ENCODE measurements at regions of chr11 and their contacts with region 1.

Region 1: DNA sequence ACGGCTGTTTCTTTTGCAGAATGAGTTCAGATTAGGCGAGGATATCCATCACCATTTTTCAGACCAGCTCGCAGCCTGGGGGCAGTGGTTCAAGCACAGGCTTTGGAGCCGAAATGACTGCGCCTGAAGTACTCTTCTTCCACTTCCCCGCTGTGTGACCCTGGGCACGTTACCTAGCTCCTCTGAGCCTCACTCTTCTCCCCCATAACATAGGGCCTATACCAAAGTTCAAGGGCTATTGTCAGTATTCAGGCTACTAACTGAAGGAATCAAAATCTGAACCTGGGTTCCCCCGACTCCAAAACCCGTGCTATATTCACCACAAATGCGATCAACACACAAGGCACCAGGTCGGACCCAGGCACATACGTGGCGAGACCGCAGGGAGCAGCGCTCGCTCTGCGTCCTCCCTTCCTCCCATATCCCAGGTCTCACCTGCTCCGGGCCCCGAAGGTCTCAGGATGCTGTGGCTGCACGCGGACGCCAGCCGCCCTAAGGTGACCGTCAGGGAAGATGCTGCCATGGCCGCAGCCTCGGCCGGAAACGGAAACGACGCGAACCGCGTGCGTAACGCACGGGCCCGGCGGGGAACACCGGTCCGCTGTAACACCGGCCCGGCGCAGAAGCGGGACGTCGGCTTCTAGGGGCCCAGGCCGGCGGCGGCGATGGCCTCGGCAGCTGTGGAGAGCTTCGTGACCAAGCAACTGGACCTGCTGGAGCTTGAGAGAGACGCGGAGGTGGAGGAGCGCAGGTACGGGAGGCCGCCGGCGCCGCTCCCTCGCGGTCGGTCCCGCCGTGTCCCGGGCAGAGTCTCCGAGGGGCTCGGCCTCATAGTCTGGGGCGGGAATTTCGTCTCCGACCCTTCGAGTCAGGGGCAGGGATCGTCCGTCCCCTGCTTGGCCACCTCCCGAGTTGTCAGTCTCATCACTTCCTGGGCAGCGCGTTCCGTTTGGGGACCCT is at the starts of genes IGHMBP2 and MRPL21:
- DNase-seq: peak; percentile 76 to 93 (median 86)
- ATAC-seq: peak; percentile 90
- H3K4me3 ChIP-seq: peak within 1 kb of the TSS; percentile 55 to 82
- H3K4me3 Mint-ChIP-seq: peak within 1 kb of the TSS; percentile 98
- H3K27ac ChIP-seq: peak within 1 kb of the TSS; percentile 64 to 87
- H3K27ac Mint-ChIP-seq: peak within 1 kb of the TSS; percentile 97
- H3K4me1 ChIP-seq: peaks cover 19% of the 10 kb centered on the region
- H3K4me1 Mint-ChIP-seq: peaks cover 46% of the 10 kb centered on the region
- H3K27me3 ChIP-seq: no peaks in the 10 kb centered on the region
- H3K27me3 Mint-ChIP-seq: no peaks in the 10 kb centered on the region
- CTCF ChIP-seq: no peak
- total RNA-seq, gene IGHMBP2: 25.5 to 27.3 TPM
- total RNA-seq, gene MRPL21: 48.4 to 53.6 TPM

Region 2: GRCh38 chr11:68459886-68460740 is 443.5 kb before region 1 on chr11:
- CTCF ChIA-PET with region 1: no interaction called
- POLR2A ChIA-PET with region 1: no interaction called
- intact Hi-C with region 1: loop called in 1 of 2 experiments (anchors 5 kb)
- DNase-seq: peak; percentile 90 to 98 (median 94)
- ATAC-seq: peak; percentile 91
- H3K4me3 ChIP-seq: peak overlapping the region; percentile 92 to 95
- H3K4me3 Mint-ChIP-seq: peak overlapping the region; percentile 97
- H3K27ac ChIP-seq: peak overlapping the region; percentile 95 to 98
- H3K27ac Mint-ChIP-seq: peak overlapping the region; percentile 98
- H3K4me1 ChIP-seq: peaks cover 35% of the 10 kb centered on the region
- H3K4me1 Mint-ChIP-seq: peaks cover 38% of the 10 kb centered on the region
- H3K27me3 ChIP-seq: no peaks in the 10 kb centered on the region
- H3K27me3 Mint-ChIP-seq: no peaks in the 10 kb centered on the region
- CTCF ChIP-seq: no peak

Region 3: GRCh38 chr11:68751004-68751856 is 152.3 kb before region 1 on chr11 and contains the start of gene TESMIN:
- CTCF ChIA-PET with region 1: no interaction called
- POLR2A ChIA-PET with region 1: no interaction called
- intact Hi-C with region 1: loop called in 1 of 2 experiments (anchors 5 kb)
- DNase-seq: peak; percentile 83 to 95 (median 91)
- ATAC-seq: peak; percentile 99
- H3K4me3 ChIP-seq: peak within 1 kb of the TSS; percentile 30 to 50
- H3K4me3 Mint-ChIP-seq: peak within 1 kb of the TSS; percentile 72
- H3K27ac ChIP-seq: no peak within 1 kb of the TSS
- H3K27ac Mint-ChIP-seq: no peak within 1 kb of the TSS
- H3K4me1 ChIP-seq: peaks cover 7% of the 10 kb centered on the region
- H3K4me1 Mint-ChIP-seq: peaks cover 13% of the 10 kb centered on the region
- H3K27me3 ChIP-seq: no peaks in the 10 kb centered on the region
- H3K27me3 Mint-ChIP-seq: no peaks in the 10 kb centered on the region
- CTCF ChIP-seq: no peak
- total RNA-seq, gene TESMIN: 1.8 to 2.5 TPM

Region 4: GRCh38 chr11:68825571-68825970 is 78.0 kb before region 1 on chr11:
- CTCF ChIA-PET with region 1: no interaction called
- POLR2A ChIA-PET with region 1: no interaction called
- intact Hi-C with region 1: loop called in 1 of 2 experiments (anchors 1 kb)
- DNase-seq: peak in 8 of 9 experiments; percentile 54 to 75 (median 67)
- ATAC-seq: peak; percentile 91
- H3K4me3 ChIP-seq: no peak overlapping the region
- H3K4me3 Mint-ChIP-seq: no peak overlapping the region
- H3K27ac ChIP-seq: no peak overlapping the region
- H3K27ac Mint-ChIP-seq: peak overlapping the region; percentile 32
- H3K4me1 ChIP-seq: peaks cover 35% of the 10 kb centered on the region
- H3K4me1 Mint-ChIP-seq: peaks cover 48% of the 10 kb centered on the region
- H3K27me3 ChIP-seq: no peaks in the 10 kb centered on the region
- H3K27me3 Mint-ChIP-seq: no peaks in the 10 kb centered on the region
- CTCF ChIP-seq: peak; percentile 21

Region 5: DNA sequence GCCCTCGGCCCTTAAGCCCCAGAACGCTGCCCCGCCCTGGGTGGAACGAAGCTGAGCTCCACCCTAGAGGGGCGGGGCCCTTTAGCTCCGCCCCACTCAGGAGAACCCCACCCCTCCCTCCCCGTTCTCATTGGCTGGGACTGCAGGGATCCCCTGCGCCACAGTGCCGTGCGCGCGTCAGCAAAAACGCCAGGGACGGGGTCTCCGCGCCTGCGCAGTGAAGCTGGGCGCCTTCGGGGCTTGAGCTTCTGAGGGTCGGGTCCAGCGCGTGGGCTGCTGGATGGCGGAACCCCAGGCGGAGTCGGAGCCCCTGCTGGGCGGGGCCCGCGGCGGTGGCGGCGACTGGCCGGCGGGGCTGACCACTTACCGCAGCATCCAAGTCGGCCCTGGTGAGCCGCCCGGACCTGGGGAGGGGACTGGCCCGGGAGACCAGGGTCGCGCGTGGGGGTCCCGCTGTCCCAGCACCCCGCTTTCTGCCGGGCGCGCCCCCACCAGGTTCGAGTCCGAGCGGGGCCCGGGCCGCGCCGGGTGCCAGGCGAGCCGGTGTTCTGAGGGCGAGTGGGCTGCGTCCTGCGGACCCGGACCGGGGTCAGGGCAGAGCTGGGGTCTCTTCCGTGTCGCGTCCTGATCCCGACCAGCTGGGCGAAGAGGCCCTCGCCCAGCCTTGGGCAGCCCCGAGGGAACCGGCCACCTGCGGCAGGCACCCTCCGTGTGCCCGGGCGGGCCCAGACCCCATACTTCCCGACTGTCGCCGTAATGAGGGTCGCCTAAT is 145.3 kb after region 1 on chr11 and contains the start of gene TPCN2:
- CTCF ChIA-PET with region 1: no interaction called
- POLR2A ChIA-PET with region 1: no interaction called
- intact Hi-C with region 1: loop called (anchors 1 to 2 kb)
- DNase-seq: peak; percentile 79 to 98 (median 89)
- ATAC-seq: peak; percentile 98
- H3K4me3 ChIP-seq: peak within 1 kb of the TSS; percentile 61 to 70
- H3K4me3 Mint-ChIP-seq: peak within 1 kb of the TSS; percentile 79
- H3K27ac ChIP-seq: peak within 1 kb of the TSS; percentile 74 to 91
- H3K27ac Mint-ChIP-seq: peak within 1 kb of the TSS; percentile 92
- H3K4me1 ChIP-seq: peaks cover 9% of the 10 kb centered on the region
- H3K4me1 Mint-ChIP-seq: peaks cover 28% of the 10 kb centered on the region
- H3K27me3 ChIP-seq: no peaks in the 10 kb centered on the region
- H3K27me3 Mint-ChIP-seq: no peaks in the 10 kb centered on the region
- CTCF ChIP-seq: no peak
- total RNA-seq, gene TPCN2: 13.1 to 15.0 TPM

Region 6: DNA sequence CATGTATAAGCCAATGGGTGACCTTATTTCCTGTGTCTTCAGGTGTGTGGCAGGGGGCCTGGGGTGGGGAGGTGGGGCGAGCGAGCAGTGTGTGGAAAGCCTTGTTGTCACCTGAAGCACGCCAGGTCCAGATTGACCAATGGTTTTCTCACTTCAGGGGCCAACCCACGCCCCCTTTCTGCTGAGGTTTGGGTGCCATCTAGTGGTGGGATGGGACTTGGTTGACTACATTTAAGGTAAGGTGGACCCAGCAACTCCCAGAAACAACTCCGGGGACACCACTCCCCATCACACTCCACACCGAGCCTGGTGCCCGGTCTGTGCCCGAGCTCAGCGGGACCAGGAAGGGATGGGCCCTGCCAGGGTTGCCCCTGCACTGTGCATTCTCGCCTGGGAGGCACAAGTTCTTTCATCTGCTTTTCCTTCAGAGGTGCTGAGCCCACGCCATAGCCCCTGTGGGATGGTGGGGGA is 185.1 kb after region 1 on chr11:
- CTCF ChIA-PET with region 1: interaction called, 3 read pairs
- POLR2A ChIA-PET with region 1: no interaction called
- intact Hi-C with region 1: loop called in 1 of 2 experiments (anchors 1 kb)
- DNase-seq: peak; percentile 20 to 69 (median 53)
- ATAC-seq: peak; percentile 71
- H3K4me3 ChIP-seq: no peak overlapping the region
- H3K4me3 Mint-ChIP-seq: no peak overlapping the region
- H3K27ac ChIP-seq: no peak overlapping the region
- H3K27ac Mint-ChIP-seq: no peak overlapping the region
- H3K4me1 ChIP-seq: no peaks in the 10 kb centered on the region
- H3K4me1 Mint-ChIP-seq: no peaks in the 10 kb centered on the region
- H3K27me3 ChIP-seq: no peaks in the 10 kb centered on the region
- H3K27me3 Mint-ChIP-seq: no peaks in the 10 kb centered on the region
- CTCF ChIP-seq: peak; percentile 62

Region 7: DNA sequence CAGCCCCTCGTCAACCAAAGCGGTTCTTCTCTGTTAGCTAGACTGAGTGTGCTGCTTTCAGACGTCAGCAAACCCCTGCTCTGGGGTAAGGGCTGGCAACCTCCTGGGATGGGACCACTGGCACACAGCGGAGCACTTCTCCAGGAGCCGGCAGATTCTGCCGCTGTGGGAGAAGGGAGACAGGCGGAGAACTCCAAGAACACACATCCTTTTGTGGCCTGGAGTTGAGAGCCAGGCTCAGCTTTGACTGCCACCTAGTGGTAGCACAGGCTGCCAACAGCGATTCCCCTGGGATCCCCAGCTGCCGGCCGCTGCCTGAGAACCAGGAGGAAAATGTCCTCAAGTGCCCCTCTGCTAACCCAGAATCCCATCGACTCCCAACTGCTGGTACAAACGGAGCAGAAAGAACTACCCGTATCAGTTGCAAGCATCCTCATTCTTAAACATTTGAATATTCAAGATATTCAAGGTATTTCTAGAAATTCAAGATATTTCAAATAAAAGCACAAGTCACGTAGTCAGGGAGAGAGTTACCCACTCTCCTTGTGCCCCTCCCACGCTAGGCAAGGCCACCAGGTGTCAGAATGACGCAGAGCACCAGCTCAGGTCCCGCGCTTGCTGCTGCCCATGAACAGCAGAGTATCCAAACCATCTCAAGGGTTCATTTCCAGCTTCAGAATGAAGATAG is 766.7 kb after region 1 on chr11:
- CTCF ChIA-PET with region 1: interaction called, 3 read pairs
- POLR2A ChIA-PET with region 1: no interaction called
- intact Hi-C with region 1: loop called in 1 of 2 experiments (anchors 2 kb)
- DNase-seq: peak; percentile 27 to 74 (median 61)
- ATAC-seq: peak; percentile 21
- H3K4me3 ChIP-seq: no peak overlapping the region
- H3K4me3 Mint-ChIP-seq: no peak overlapping the region
- H3K27ac ChIP-seq: no peak overlapping the region
- H3K27ac Mint-ChIP-seq: peak overlapping the region; percentile 62
- H3K4me1 ChIP-seq: peaks cover 23% of the 10 kb centered on the region
- H3K4me1 Mint-ChIP-seq: peaks cover 31% of the 10 kb centered on the region
- H3K27me3 ChIP-seq: no peaks in the 10 kb centered on the region
- H3K27me3 Mint-ChIP-seq: no peaks in the 10 kb centered on the region
- CTCF ChIP-seq: peak; percentile 74

Measured in CD8-positive, alpha-beta T cell (primary cell).